ENCODE measurements at regions of chr3 and their contacts with region 1.

Region 1: GRCh38 chr3:152268555-152269425 is at the start of gene MBNL1:
- DNase-seq: peak; percentile 83 to 93 (median 86)
- H3K4me3 ChIP-seq: peak within 1 kb of the TSS; percentile 87 to 90
- H3K4me3 Mint-ChIP-seq: peak within 1 kb of the TSS; percentile 90 to 100 (median 97)
- H3K27ac ChIP-seq: peak within 1 kb of the TSS; percentile 91
- H3K27ac Mint-ChIP-seq: peak within 1 kb of the TSS; percentile 80 to 100 (median 97)
- H3K4me1 ChIP-seq: peaks cover 61% of the 10 kb centered on the region
- H3K4me1 Mint-ChIP-seq: peaks cover 44 to 80% (median 57%) of the 10 kb centered on the region in 4 donors
- H3K27me3 ChIP-seq: no peaks in the 10 kb centered on the region
- H3K27me3 Mint-ChIP-seq: no peaks in the 10 kb centered on the region
- total RNA-seq, gene MBNL1: 420 to 430 TPM

Region 2: GRCh38 chr3:152183473-152183872 is 85.3 kb before region 1 on chr3:
- CTCF ChIA-PET with region 1: interaction called, 13 read pairs
- POLR2A ChIA-PET with region 1: interaction called, 55 read pairs
- intact Hi-C with region 1: no loop called
- DNase-seq: peak; percentile 43 to 56 (median 55)
- H3K4me3 ChIP-seq: no peak overlapping the region
- H3K4me3 Mint-ChIP-seq: peak overlapping the region in 7 of 8 donors; percentile 7 to 50 (median 32)
- H3K27ac ChIP-seq: no peak overlapping the region
- H3K27ac Mint-ChIP-seq: peak overlapping the region in 5 of 7 donors; percentile 8 to 83 (median 61)
- H3K4me1 ChIP-seq: peaks cover 53% of the 10 kb centered on the region
- H3K4me1 Mint-ChIP-seq: peaks cover 29 to 48% (median 39%) of the 10 kb centered on the region in 4 donors
- H3K27me3 ChIP-seq: no peaks in the 10 kb centered on the region
- H3K27me3 Mint-ChIP-seq: no peaks in the 10 kb centered on the region

Region 3: DNA sequence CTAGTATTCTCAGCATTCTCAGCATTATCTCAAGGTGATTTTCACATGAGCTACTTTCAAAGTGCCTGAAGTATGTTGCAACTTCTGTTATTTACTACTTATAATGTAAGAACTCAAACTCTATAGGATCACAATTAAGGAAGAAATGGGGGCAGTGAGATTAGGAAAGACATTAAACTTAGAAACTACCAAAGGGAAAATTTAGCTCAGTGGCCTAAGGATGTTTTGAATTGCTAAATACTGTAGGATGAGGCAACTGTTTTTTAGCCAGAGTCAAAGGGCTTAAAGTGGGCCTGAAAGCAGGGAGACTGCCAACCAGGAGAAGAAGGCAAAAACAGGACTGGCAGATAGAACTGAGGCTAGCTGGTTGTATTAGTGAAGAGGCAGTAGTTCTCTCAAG is 55.6 kb before region 1 on chr3:
- CTCF ChIA-PET with region 1: interaction called, 5 read pairs
- POLR2A ChIA-PET with region 1: interaction called, 18 read pairs
- intact Hi-C with region 1: no loop called
- DNase-seq: no peak
- H3K4me3 ChIP-seq: no peak overlapping the region
- H3K4me3 Mint-ChIP-seq: peak overlapping the region in 2 of 8 donors; percentile 13 to 33
- H3K27ac ChIP-seq: no peak overlapping the region
- H3K27ac Mint-ChIP-seq: peak overlapping the region; percentile 1 to 80 (median 18)
- H3K4me1 ChIP-seq: peaks cover 50% of the 10 kb centered on the region
- H3K4me1 Mint-ChIP-seq: peaks cover 45 to 65% (median 56%) of the 10 kb centered on the region in 4 donors
- H3K27me3 ChIP-seq: no peaks in the 10 kb centered on the region
- H3K27me3 Mint-ChIP-seq: no peaks in the 10 kb centered on the region

Region 4: DNA sequence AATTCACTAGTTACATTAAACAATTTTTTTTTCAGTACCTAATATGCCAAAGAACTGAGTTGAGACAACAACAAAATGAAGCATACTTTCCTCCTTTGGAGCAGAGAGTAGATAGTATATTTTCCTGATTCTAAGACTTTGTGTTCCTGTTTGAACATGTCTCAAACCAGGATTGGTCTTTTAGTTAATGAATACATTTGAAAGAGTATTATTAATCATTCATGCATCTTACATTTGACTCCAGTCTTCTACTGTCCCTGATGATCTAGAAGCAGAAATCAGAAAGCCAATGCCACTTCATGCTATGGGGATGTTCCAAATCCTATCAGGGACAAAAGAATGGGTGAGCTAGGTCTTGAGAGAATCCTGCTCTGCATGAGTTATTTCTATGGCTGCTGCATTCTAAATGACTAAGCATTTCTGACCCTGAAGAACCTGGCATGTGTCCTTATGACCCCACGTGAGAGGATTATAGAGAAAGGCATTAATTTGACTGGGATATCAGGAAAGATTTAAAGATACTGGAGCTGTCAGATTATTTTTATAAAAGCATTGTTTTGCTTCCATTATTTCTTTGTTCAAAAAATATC is 33.0 kb before region 1 on chr3:
- CTCF ChIA-PET with region 1: interaction called, 3 read pairs
- POLR2A ChIA-PET with region 1: interaction called, 414 read pairs
- intact Hi-C with region 1: loop called (anchors 5 kb)
- DNase-seq: no peak
- H3K4me3 ChIP-seq: no peak overlapping the region
- H3K4me3 Mint-ChIP-seq: peak overlapping the region in 5 of 8 donors; percentile 8 to 74 (median 26)
- H3K27ac ChIP-seq: no peak overlapping the region
- H3K27ac Mint-ChIP-seq: peak overlapping the region in 6 of 7 donors; percentile 49 to 92 (median 80)
- H3K4me1 ChIP-seq: peaks cover 72% of the 10 kb centered on the region
- H3K4me1 Mint-ChIP-seq: peaks cover 55 to 83% (median 68%) of the 10 kb centered on the region in 4 donors
- H3K27me3 ChIP-seq: no peaks in the 10 kb centered on the region
- H3K27me3 Mint-ChIP-seq: no peaks in the 10 kb centered on the region

Region 5: GRCh38 chr3:152281133-152281713 is 12.4 kb after region 1 on chr3:
- CTCF ChIA-PET with region 1: interaction called, 5 read pairs
- POLR2A ChIA-PET with region 1: interaction called, 206 read pairs
- intact Hi-C with region 1: loop called (anchors 1 kb)
- DNase-seq: no peak
- H3K4me3 ChIP-seq: no peak overlapping the region
- H3K4me3 Mint-ChIP-seq: peak overlapping the region; percentile 15 to 87 (median 70)
- H3K27ac ChIP-seq: peak overlapping the region; percentile 61
- H3K27ac Mint-ChIP-seq: peak overlapping the region; percentile 62 to 88 (median 76)
- H3K4me1 ChIP-seq: peaks cover 97% of the 10 kb centered on the region
- H3K4me1 Mint-ChIP-seq: peaks cover 61 to 85% (median 72%) of the 10 kb centered on the region in 4 donors
- H3K27me3 ChIP-seq: no peaks in the 10 kb centered on the region
- H3K27me3 Mint-ChIP-seq: no peaks in the 10 kb centered on the region

Region 6: GRCh38 chr3:152309535-152310307 is 40.9 kb after region 1 on chr3:
- CTCF ChIA-PET with region 1: interaction called, 3 read pairs
- POLR2A ChIA-PET with region 1: interaction called, 11 read pairs
- intact Hi-C with region 1: no loop called
- DNase-seq: peak in 3 of 5 donors; percentile 35 to 50 (median 44)
- H3K4me3 ChIP-seq: no peak overlapping the region
- H3K4me3 Mint-ChIP-seq: peak overlapping the region; percentile 4 to 62 (median 44)
- H3K27ac ChIP-seq: peak overlapping the region; percentile 33
- H3K27ac Mint-ChIP-seq: peak overlapping the region; percentile 39 to 90 (median 67)
- H3K4me1 ChIP-seq: peaks cover 88% of the 10 kb centered on the region
- H3K4me1 Mint-ChIP-seq: peaks cover 59 to 83% (median 70%) of the 10 kb centered on the region in 4 donors
- H3K27me3 ChIP-seq: no peaks in the 10 kb centered on the region
- H3K27me3 Mint-ChIP-seq: no peaks in the 10 kb centered on the region